ENCODE measurements at regions of chr5 and their contacts with region 1.

Region 1: GRCh38 chr5:112757468-112758208 is 20.0 kb downstream of the APC start:
- DNase-seq: peak in 7 of 9 donors; percentile 14 to 64 (median 52)
- ATAC-seq: peak; percentile 88
- H3K4me3 ChIP-seq: no peak overlapping the region
- H3K4me3 Mint-ChIP-seq: no peak overlapping the region
- H3K27ac ChIP-seq: no peak overlapping the region
- H3K27ac Mint-ChIP-seq: peak overlapping the region in 5 of 9 donors; percentile 36 to 82 (median 58)
- H3K4me1 ChIP-seq: no peaks in the 10 kb centered on the region
- H3K4me1 Mint-ChIP-seq: peaks cover 3 to 25% (median 18%) of the 10 kb centered on the region in 7 donors
- H3K27me3 ChIP-seq: no peaks in the 10 kb centered on the region
- H3K27me3 Mint-ChIP-seq: no peaks in the 10 kb centered on the region

Region 2: DNA sequence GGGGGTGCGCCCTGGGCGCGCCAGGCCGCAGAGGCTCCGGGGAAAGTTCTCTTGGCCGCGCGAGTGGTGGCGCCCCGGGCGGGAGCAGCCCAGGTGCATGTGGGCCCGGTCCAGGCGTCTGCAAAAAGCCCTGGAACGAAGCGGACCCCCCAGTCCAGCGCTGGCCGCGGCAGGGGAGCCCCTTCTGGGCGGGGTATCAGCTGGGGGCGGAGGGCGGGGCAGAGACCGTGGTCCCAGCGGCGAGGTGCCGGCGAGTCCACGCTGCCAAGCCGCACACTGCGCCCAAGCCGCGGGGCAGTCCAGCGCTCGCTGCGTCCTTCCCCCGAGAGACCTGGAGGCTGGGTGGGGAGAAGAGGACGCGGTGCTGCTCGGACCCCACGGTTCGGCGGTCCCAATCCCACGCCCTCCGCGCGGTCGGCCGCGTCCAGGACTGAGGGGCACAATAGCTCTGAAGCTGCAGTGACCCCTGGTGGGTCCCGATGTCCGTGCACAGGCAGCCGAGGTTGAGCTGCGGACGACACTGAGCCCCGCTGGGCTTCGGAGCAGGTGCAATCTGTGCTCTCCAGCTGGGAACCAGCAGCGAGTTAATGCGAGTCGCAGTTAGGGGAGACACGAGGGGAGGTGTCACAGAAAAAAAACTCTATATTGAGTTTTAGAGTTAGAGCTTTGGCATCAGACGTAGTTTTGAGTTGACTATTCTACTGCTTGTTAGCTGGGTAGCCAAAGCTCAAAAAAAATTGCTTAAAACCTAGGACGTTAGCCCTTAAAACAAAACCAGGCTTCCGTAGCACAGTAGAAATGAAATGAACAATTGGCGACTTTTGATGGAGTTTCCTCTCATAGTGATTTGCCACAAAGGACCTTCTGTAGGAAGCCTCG is 337.4 kb before region 1 on chr5:
- CTCF ChIA-PET with region 1: interaction called, 3 read pairs
- POLR2A ChIA-PET with region 1: no interaction called
- intact Hi-C with region 1: loop called in 1 of 2 experiments (anchors 5 kb)
- DNase-seq: peak in 1 of 9 donors; percentile 39
- ATAC-seq: peak; percentile 76
- H3K4me3 ChIP-seq: no peak overlapping the region
- H3K4me3 Mint-ChIP-seq: peak overlapping the region in 7 of 10 donors; percentile 37 to 81 (median 56)
- H3K27ac ChIP-seq: no peak overlapping the region
- H3K27ac Mint-ChIP-seq: no peak overlapping the region
- H3K4me1 ChIP-seq: no peaks in the 10 kb centered on the region
- H3K4me1 Mint-ChIP-seq: peaks cover 0 to 17% (median 13%) of the 10 kb centered on the region in 7 donors
- H3K27me3 ChIP-seq: peaks cover 3 to 9% of the 10 kb centered on the region in 2 donors
- H3K27me3 Mint-ChIP-seq: peaks cover 48 to 67% (median 61%) of the 10 kb centered on the region in 5 donors

Region 3: DNA sequence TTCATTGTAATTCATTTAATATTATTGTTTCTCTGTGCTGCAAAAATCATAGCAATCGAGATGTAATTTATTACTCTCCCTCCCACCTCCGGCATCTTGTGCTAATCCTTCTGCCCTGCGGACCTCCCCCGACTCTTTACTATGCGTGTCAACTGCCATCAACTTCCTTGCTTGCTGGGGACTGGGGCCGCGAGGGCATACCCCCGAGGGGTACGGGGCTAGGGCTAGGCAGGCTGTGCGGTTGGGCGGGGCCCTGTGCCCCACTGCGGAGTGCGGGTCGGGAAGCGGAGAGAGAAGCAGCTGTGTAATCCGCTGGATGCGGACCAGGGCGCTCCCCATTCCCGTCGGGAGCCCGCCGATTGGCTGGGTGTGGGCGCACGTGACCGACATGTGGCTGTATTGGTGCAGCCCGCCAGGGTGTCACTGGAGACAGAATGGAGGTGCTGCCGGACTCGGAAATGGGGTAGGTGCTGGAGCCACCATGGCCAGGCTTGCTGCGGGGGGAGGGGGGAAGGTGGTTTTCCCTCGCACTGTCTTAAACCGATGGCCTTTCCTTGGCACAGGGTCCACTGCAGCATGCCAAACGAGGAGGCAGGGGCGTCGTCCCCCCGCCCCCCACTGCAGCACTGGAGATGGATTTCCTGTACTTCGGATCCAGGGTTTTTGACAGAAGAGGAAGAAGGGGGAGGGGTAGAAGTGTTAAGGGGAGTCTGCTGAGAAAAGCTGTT is 20.0 kb before region 1 on chr5 and contains the start of gene APC:
- CTCF ChIA-PET with region 1: interaction called, 7 read pairs
- POLR2A ChIA-PET with region 1: no interaction called
- intact Hi-C with region 1: loop called in 1 of 2 experiments (anchors 1 kb)
- DNase-seq: peak; percentile 52 to 81 (median 66)
- ATAC-seq: peak; percentile 97
- H3K4me3 ChIP-seq: peak within 1 kb of the TSS; percentile 76
- H3K4me3 Mint-ChIP-seq: peak within 1 kb of the TSS; percentile 93 to 98 (median 95)
- H3K27ac ChIP-seq: peak within 1 kb of the TSS; percentile 58
- H3K27ac Mint-ChIP-seq: peak within 1 kb of the TSS; percentile 3 to 88 (median 51)
- H3K4me1 ChIP-seq: peaks cover 0 to 9% of the 10 kb centered on the region in 2 donors
- H3K4me1 Mint-ChIP-seq: peaks cover 18 to 63% (median 38%) of the 10 kb centered on the region in 7 donors
- H3K27me3 ChIP-seq: no peaks in the 10 kb centered on the region
- H3K27me3 Mint-ChIP-seq: peaks cover 0 to 5% (median 0%) of the 10 kb centered on the region in 5 donors
- total RNA-seq, gene APC: 25.1 to 53.2 (median 37.6) TPM

Region 4: DNA sequence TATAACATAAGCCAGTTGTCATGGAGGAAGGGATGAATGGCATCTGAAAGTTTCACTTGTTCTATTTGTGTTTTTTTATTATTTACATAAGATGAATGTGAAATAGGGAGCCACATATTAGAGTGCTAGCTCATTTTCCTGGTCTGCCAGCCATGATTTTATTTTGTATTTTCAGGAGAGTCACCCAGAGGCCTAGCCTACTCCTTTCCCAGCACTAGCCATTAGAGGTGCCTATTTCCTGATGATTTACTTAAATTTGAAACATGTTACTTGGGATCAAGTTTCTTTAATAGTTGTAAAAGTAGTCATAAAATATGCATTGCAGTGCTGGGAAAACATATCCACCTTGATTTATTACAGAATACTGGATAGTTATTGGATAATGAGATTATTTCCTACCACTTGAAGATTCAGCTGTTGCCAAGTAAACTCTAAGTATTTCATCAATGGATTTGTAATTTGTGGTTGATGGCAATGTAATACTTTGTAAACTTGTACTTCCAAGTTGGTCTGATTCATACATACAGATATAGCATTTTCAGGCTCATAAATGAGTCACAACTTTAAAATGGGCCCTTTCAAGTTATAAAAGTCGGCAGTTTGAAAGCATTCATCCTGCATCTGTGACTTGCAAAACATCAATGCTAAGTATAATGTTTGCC is 1655.0 kb after region 1 on chr5:
- CTCF ChIA-PET with region 1: no interaction called
- POLR2A ChIA-PET with region 1: no interaction called
- intact Hi-C with region 1: no loop called
- DNase-seq: no peak
- ATAC-seq: no peak
- H3K4me3 ChIP-seq: no peak overlapping the region
- H3K4me3 Mint-ChIP-seq: no peak overlapping the region
- H3K27ac ChIP-seq: no peak overlapping the region
- H3K27ac Mint-ChIP-seq: no peak overlapping the region
- H3K4me1 ChIP-seq: no peaks in the 10 kb centered on the region
- H3K4me1 Mint-ChIP-seq: no peaks in the 10 kb centered on the region
- H3K27me3 ChIP-seq: no peaks in the 10 kb centered on the region
- H3K27me3 Mint-ChIP-seq: peaks cover 0 to 4% (median 0%) of the 10 kb centered on the region in 5 donors